Dorsolateral prefrontal cortex (tissue), 120 donors: ENCODE measurements at regions of chr16 and their contacts with region 1.

Region 1: GRCh38 chr16:14529010-14529669 is 100.9 kb downstream of the PARN start:
- DNase-seq: peak; percentile 30 to 77 (median 67)
- H3K4me3 ChIP-seq: peak overlapping the region in 47 of 59 donors; percentile 8 to 54 (median 39)
- H3K27ac ChIP-seq: peak overlapping the region in 5 of 59 donors; percentile 13 to 65 (median 40)
- H3K27me3 ChIP-seq: no peaks in the 10 kb centered on the region
- CTCF ChIP-seq: peak; percentile 78 to 95 (median 86)

Region 2: GRCh38 chr16:14249291-14250032 is 279.7 kb before region 1 on chr16:
- intact Hi-C with region 1: loop called (anchors 1 to 5 kb)
- DNase-seq: peak in 3 of 10 donors; percentile 17 to 61 (median 59)
- H3K4me3 ChIP-seq: no peak overlapping the region
- H3K27ac ChIP-seq: peak overlapping the region in 2 of 59 donors; percentile 22 to 34
- H3K27me3 ChIP-seq: no peaks in the 10 kb centered on the region
- CTCF ChIP-seq: peak; percentile 65 to 93 (median 84)

Region 3: DNA sequence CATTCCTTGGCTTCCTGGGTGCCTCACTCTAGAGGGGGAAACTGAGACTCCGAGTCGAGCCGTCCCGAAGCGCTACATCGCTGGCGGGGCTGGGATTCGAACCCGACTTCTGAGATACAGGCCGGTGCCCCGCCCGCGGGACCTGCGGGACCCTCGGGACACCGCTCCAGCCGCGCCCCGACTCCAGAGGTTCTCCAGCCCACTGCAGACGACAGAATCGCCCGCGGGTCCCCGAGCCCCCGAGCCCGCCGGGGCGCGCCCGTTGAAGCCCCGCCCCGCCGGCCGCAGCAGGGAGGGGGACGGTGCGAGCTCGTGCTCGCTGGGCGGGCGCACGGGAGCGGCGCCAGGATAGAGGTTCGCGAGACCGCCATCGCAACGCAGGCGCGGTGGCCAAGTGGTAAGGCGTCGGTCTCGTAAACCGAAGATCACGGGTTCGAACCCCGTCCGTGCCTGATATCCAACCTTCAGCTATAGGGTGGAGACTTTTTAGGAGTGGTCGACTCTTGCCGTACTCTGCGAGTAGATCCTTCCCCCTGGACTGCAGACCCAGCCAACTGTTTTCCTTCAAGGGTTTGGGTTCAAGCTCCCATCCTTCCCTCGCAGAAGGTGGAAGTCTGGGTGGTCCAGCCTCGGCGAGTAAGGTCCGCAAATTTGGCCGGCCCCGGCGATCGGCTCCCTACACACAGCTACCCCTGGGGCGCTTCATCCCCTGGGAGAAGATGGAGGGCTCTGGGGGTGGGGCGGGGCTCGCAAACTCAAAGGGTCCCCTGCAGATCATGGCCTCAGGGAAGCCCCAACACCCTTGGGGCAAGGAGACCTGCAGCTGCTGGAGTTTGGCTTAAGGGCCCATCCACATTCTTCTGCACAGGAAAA is 243.4 kb before region 1 on chr16:
- intact Hi-C with region 1: loop called in 1 of 2 experiments (anchors 2 kb)
- DNase-seq: peak; percentile 87 to 94 (median 93)
- H3K4me3 ChIP-seq: peak overlapping the region; percentile 58 to 95 (median 83)
- H3K27ac ChIP-seq: peak overlapping the region; percentile 73 to 94 (median 88)
- H3K27me3 ChIP-seq: no peaks in the 10 kb centered on the region
- CTCF ChIP-seq: peak in 18 of 56 donors; percentile 1 to 40 (median 16)

Region 4: GRCh38 chr16:14300705-14301168 is 228.4 kb before region 1 on chr16:
- intact Hi-C with region 1: loop called (anchors 2 to 5 kb)
- DNase-seq: peak in 6 of 10 donors; percentile 62 to 70 (median 64)
- H3K4me3 ChIP-seq: peak overlapping the region in 53 of 59 donors; percentile 13 to 93 (median 85)
- H3K27ac ChIP-seq: peak overlapping the region in 25 of 59 donors; percentile 3 to 83 (median 59)
- H3K27me3 ChIP-seq: no peaks in the 10 kb centered on the region
- CTCF ChIP-seq: peak in 55 of 56 donors; percentile 34 to 78 (median 63)

Region 5: DNA sequence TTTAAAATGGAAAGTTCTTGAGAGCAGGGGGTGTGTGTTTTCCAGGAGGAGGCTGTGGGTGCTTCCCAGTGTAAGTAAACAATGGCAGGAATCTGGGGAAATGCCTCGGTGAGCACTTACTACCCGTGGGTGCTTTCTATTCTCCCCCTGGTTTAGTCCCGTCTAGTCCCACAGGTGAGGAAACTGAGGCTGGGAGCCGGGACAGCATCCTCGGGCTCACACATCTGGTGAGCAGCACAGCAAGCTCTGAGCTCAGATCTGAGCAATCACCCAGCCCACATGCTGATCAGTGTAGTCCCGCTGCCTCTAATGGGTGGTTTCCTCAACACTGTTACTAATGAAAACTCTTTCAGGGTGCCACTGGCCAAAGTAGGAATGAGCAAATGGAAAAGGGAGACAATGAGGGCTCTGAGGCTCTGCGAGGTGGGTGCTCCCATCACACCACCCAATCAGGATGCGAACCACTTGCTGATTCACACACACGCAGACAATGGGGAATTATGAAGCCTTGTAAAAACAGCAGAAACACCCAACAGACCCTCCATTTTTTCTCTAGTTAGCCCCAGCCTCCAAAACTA is 101.7 kb before region 1 on chr16:
- intact Hi-C with region 1: loop called in 1 of 2 experiments (anchors 2 kb)
- DNase-seq: peak in 8 of 10 donors; percentile 49 to 83 (median 68)
- H3K4me3 ChIP-seq: peak overlapping the region in 16 of 59 donors; percentile 1 to 36 (median 16)
- H3K27ac ChIP-seq: peak overlapping the region; percentile 58 to 97 (median 93)
- H3K27me3 ChIP-seq: no peaks in the 10 kb centered on the region
- CTCF ChIP-seq: peak in 2 of 56 donors; percentile 12 to 38

Region 6: GRCh38 chr16:14486520-14487303 is 42.4 kb before region 1 on chr16:
- intact Hi-C with region 1: loop called in 1 of 2 experiments (anchors 2 kb)
- DNase-seq: peak; percentile 37 to 89 (median 76)
- H3K4me3 ChIP-seq: peak overlapping the region in 58 of 59 donors; percentile 1 to 62 (median 46)
- H3K27ac ChIP-seq: peak overlapping the region in 58 of 59 donors; percentile 0 to 84 (median 70)
- H3K27me3 ChIP-seq: no peaks in the 10 kb centered on the region
- CTCF ChIP-seq: peak in 11 of 56 donors; percentile 7 to 44 (median 19)

Region 7: GRCh38 chr16:14497245-14498082 is 31.7 kb before region 1 on chr16:
- intact Hi-C with region 1: no loop called
- DNase-seq: no peak
- H3K4me3 ChIP-seq: no peak overlapping the region
- H3K27ac ChIP-seq: no peak overlapping the region
- H3K27me3 ChIP-seq: no peaks in the 10 kb centered on the region
- CTCF ChIP-seq: no peak